K562 (cell line): ENCODE measurements at regions of chr11 and their contacts with region 1.

Region 1: DNA sequence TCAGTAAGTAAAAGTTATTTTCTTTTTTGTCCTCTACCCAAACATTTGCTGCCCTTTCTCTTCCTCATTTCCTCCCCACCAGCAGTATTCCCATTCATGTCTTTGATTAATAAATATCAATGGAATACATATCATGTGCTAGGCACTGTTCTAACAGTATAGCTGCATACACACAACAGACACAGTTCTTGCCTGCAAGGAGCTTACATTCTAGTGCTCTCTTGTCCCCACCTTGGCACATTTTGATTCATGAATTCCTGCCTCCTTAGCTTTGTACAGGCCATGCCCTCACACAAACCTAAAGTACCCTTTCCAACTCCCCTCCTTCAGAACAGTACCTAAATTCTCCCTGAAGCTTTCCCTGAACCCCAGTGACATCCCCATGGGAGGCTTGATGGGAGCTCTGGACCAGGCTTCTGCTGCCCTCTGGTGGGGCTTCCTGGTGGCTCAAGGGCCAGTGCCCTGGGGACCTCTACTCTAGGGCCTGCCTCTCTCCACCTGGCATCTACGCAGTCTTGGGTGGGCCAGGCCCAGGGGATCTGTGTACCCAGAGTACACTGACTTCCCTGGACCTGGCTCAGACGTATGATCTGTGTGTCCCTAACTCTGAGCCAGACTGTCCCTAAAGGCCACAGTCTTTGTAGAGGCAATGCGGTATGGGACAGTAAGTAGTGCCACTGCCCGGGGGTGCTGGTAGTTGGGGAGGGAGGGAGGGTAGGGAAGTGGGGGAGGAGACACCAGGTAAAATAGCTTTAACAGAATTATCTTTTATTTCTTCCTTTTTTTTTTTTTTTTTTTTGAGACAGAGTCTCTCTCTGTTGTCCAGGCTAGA is 14.1 kb downstream of the RPS13 start:
- DNase-seq: peak; percentile 58 to 64 (median 60)
- ATAC-seq: peak; percentile 97
- H3K4me3 ChIP-seq: no peak overlapping the region
- H3K27ac ChIP-seq: no peak overlapping the region
- H3K4me1 ChIP-seq: no peaks in the 10 kb centered on the region
- H3K27me3 ChIP-seq: no peaks in the 10 kb centered on the region
- CTCF ChIP-seq: peak; percentile 70 to 80 (median 73)
- EP300 ChIP-seq: no peak
- POLR2A ChIP-seq: no peak
- RAD21 ChIP-seq: peak; percentile 78 to 91

Region 2: GRCh38 chr11:16815043-16815767 is 248.2 kb before region 1 on chr11:
- CTCF ChIA-PET with region 1: no interaction called
- POLR2A ChIA-PET with region 1: no interaction called
- in situ Hi-C with region 1: loop called (anchors 5 kb)
- intact Hi-C with region 1: no loop called
- DNase-seq: peak in 2 of 4 experiments; percentile 15 to 30
- ATAC-seq: peak; percentile 72
- H3K4me3 ChIP-seq: no peak overlapping the region
- H3K27ac ChIP-seq: no peak overlapping the region
- H3K4me1 ChIP-seq: peaks cover 5 to 11% of the 10 kb centered on the region in 2 experiments; a peak in 3 of 5 replicates
- H3K27me3 ChIP-seq: peaks cover 45 to 76% of the 10 kb centered on the region in 2 experiments
- CTCF ChIP-seq: no peak
- EP300 ChIP-seq: no peak
- POLR2A ChIP-seq: no peak
- RAD21 ChIP-seq: no peak

Region 3: GRCh38 chr11:17026487-17027082 is 36.8 kb before region 1 on chr11:
- CTCF ChIA-PET with region 1: no interaction called
- POLR2A ChIA-PET with region 1: no interaction called
- in situ Hi-C with region 1: no loop called
- intact Hi-C with region 1: no loop called
- DNase-seq: no peak
- ATAC-seq: no peak
- H3K4me3 ChIP-seq: no peak overlapping the region
- H3K27ac ChIP-seq: no peak overlapping the region
- H3K4me1 ChIP-seq: no peaks in the 10 kb centered on the region
- H3K27me3 ChIP-seq: peaks cover 0 to 17% of the 10 kb centered on the region in 2 experiments; a peak in 3 of 5 replicates
- CTCF ChIP-seq: no peak
- EP300 ChIP-seq: no peak
- POLR2A ChIP-seq: no peak
- RAD21 ChIP-seq: no peak